WTC11 (cell line): ENCODE measurements at regions of chr12 and their contacts with region 1.

Region 1: GRCh38 chr12:120528861-120529525 is at the start of gene COQ5:
- DNase-seq: peak; percentile 90
- ATAC-seq: peak; percentile 90
- H3K4me3 Mint-ChIP-seq: peak within 1 kb of the TSS; percentile 99
- H3K27ac Mint-ChIP-seq: peak within 1 kb of the TSS; percentile 99
- H3K4me1 Mint-ChIP-seq: peaks cover 8% of the 10 kb centered on the region
- H3K27me3 Mint-ChIP-seq: no peaks in the 10 kb centered on the region
- CTCF ChIP-seq: no peak
- total RNA-seq, gene COQ5: 35.1 to 44.9 TPM (median 44.5 TPM) in 3 replicates

Region 2: DNA sequence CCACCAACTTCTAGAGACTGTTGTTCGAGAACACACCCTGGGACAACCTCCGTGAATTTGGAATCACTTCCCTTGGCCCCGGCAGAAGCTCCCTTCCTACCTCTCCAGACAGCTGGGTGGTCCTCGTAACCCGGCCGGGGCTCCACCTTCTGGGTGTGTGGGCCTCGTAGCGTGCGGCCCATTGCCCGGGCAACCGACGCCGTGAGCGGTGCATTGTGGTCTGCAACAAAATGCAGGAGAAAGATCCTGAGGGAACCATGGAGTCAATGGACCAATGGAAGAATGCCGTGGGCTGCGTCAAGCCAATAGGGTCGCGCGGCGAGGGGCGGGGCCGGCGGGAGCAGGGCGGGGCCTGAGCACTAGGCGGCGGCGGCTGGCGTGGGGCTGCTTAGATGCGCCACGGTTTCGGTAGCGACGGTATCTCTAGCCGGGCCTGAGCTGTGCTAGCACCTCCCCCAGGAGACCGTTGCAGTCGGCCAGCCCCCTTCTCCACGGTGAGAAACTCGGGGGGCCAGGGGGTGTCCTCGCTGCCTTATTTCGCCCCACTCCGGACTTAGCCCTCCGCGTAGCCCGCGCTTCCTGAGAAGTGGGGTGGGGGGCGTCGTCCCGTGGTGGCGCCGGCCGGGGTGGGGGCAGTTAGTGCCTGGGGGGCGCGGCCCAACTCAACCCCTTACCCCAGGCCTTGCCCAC is 33.1 kb before region 1 on chr12 and contains the start of gene DYNLL1:
- CTCF ChIA-PET with region 1: interaction called, 4 read pairs
- POLR2A ChIA-PET with region 1: interaction called, 13 read pairs
- DNase-seq: peak; percentile 99
- ATAC-seq: peak; percentile 97
- H3K4me3 Mint-ChIP-seq: peak within 1 kb of the TSS; percentile 93
- H3K27ac Mint-ChIP-seq: peak within 1 kb of the TSS; percentile 98
- H3K4me1 Mint-ChIP-seq: peaks cover 33% of the 10 kb centered on the region
- H3K27me3 Mint-ChIP-seq: no peaks in the 10 kb centered on the region
- CTCF ChIP-seq: no peak
- total RNA-seq, gene DYNLL1: 327 to 470 TPM (median 463 TPM) in 3 replicates

Region 3: GRCh38 chr12:120514002-120514401 is 15.0 kb before region 1 on chr12:
- CTCF ChIA-PET with region 1: no interaction called
- POLR2A ChIA-PET with region 1: interaction called, 13 read pairs
- DNase-seq: no peak
- ATAC-seq: no peak
- H3K4me3 Mint-ChIP-seq: no peak overlapping the region
- H3K27ac Mint-ChIP-seq: no peak overlapping the region
- H3K4me1 Mint-ChIP-seq: no peaks in the 10 kb centered on the region
- H3K27me3 Mint-ChIP-seq: no peaks in the 10 kb centered on the region
- CTCF ChIP-seq: no peak